Activated B cell treated with CpG ODN at 0.5 μM for 24 hours (primary cell): ENCODE measurements at regions of chrX and their contacts with region 1.

Region 1: DNA sequence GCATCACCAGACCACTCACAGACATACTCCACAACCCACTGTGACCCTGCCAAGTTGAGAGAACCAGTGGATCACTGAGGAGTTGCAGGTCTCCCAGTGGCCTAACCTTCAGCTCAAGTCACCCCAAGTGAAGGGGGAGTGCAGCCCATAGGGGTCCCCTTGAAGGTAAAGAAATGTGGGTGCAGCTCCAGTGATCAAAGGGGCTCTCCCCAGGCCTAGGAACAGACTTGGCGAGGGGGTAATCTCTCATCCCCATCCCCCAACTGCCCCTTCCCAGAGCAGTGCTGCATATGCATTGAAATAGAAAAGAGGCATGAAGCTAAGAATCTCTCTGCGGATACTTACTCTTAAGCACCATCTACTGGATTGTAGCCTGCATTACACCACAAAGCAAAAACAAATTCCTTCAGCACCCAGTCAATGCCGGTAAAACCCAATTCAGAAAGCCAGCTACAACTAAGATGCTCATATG is 27.0 kb downstream of the MAGEE1 start:
- DNase-seq: no peak
- ATAC-seq: peak; percentile 45
- H3K4me3 Mint-ChIP-seq: no peak overlapping the region
- H3K27ac Mint-ChIP-seq: no peak overlapping the region
- H3K4me1 Mint-ChIP-seq: no peaks in the 10 kb centered on the region
- H3K27me3 Mint-ChIP-seq: no peaks in the 10 kb centered on the region
- CTCF ChIP-seq: no peak

Region 2: DNA sequence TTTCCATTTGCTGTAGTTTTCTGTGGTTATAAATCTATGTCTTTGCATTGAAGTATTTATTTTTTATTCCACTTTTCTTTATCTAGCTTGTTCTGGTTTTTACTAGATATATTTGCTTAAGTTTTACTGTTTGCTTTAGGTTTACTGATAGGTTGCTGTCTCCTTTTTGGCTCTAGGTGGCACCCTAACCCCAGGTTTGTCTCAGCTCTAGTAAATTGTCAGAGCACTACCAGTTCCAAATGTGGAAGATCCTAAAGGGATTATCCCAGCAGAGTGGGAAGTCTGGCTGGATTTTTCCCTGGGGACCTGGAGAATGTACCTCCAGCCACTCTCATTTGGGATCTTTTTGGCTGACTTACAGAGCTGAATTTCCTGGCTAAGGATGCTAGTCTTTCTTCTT is 175.5 kb before region 1 on chrX:
- CTCF ChIA-PET with region 1: interaction called, 46 read pairs
- POLR2A ChIA-PET with region 1: no interaction called
- intact Hi-C with region 1: loop called (anchors 1 kb)
- DNase-seq: no peak
- ATAC-seq: no peak
- H3K4me3 Mint-ChIP-seq: no peak overlapping the region
- H3K27ac Mint-ChIP-seq: no peak overlapping the region
- H3K4me1 Mint-ChIP-seq: no peaks in the 10 kb centered on the region
- H3K27me3 Mint-ChIP-seq: no peaks in the 10 kb centered on the region
- CTCF ChIP-seq: no peak

Region 3: DNA sequence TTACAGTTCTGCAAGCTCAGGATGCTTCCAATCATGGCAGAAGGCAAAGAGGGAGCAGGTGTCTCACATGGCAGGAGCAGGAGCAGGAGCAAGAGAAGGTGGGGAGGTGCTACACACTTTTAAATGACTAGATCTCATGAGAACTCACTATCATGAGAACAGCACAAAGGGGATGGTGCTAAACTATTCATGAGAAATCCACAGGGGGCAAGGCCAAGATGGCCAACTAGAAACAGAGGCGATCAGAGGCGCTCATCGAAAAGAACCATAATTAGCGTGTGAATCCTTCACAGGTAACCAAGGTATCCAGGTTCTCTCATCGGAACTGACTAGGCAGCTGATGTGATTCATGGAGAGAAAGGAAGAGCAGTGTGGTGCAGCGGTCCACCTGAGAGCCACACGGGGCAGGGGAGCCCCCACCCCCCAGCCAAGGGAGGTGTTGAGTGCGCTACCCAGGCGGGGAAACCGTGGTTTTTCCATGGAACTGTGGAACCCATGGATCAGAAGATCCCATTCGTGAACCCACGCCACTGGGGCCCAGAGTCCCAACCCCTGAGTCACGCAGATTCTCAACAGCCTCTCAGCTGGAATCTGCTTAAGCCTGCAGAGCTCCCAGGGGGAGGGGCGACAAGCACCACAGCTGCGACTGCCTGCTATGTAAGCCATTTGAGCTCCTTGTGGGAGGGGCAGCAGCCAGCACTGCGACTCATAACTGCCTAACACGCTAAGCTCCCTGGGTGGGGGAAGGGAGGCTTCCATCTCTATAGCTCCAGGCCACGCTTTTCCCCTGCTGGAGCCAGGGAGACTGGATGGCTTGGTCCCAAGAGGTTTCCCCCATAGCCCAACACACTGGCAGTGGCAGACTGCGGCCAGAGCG is 1039.4 kb after region 1 on chrX:
- CTCF ChIA-PET with region 1: no interaction called
- POLR2A ChIA-PET with region 1: no interaction called
- intact Hi-C with region 1: no loop called
- DNase-seq: no peak
- ATAC-seq: no peak
- H3K4me3 Mint-ChIP-seq: no peak overlapping the region
- H3K27ac Mint-ChIP-seq: no peak overlapping the region
- H3K4me1 Mint-ChIP-seq: no peaks in the 10 kb centered on the region
- H3K27me3 Mint-ChIP-seq: peaks cover 5% of the 10 kb centered on the region
- CTCF ChIP-seq: no peak

Region 4: GRCh38 chrX:78024349-78025108 is 1570.0 kb after region 1 on chrX:
- CTCF ChIA-PET with region 1: no interaction called
- POLR2A ChIA-PET with region 1: no interaction called
- intact Hi-C with region 1: loop called (anchors 5 kb)
- DNase-seq: peak; percentile 12
- ATAC-seq: peak; percentile 60
- H3K4me3 Mint-ChIP-seq: no peak overlapping the region
- H3K27ac Mint-ChIP-seq: no peak overlapping the region
- H3K4me1 Mint-ChIP-seq: no peaks in the 10 kb centered on the region
- H3K27me3 Mint-ChIP-seq: no peaks in the 10 kb centered on the region
- CTCF ChIP-seq: no peak